Right ventricle myocardium inferior (tissue), 1 donor: ENCODE measurements at regions of chr11 and their contacts with region 1.

Region 1: GRCh38 chr11:59171508-59172322 is at the start of gene DTX4:
- DNase-seq: peak; percentile 97
- ATAC-seq: peak; percentile 96
- total RNA-seq, gene DTX4: 2.1 TPM

Region 2: GRCh38 chr11:58829786-58830185 is 341.9 kb before region 1 on chr11:
- intact Hi-C with region 1: no loop called
- DNase-seq: no peak
- ATAC-seq: no peak

Region 3: GRCh38 chr11:59207988-59208451 is 36.3 kb after region 1 on chr11:
- intact Hi-C with region 1: loop called (anchors 1 kb)
- DNase-seq: no peak
- ATAC-seq: peak; percentile 64

Region 4: GRCh38 chr11:59283825-59284772 is 112.4 kb after region 1 on chr11:
- intact Hi-C with region 1: loop called (anchors 1 kb)
- DNase-seq: no peak
- ATAC-seq: peak; percentile 52

Region 5: GRCh38 chr11:59429924-59430516 is 258.3 kb after region 1 on chr11:
- intact Hi-C with region 1: loop called (anchors 10 kb)
- DNase-seq: no peak
- ATAC-seq: no peak

Region 6: GRCh38 chr11:59680287-59681154 is 508.8 kb after region 1 on chr11:
- intact Hi-C with region 1: loop called (anchors 10 kb)
- DNase-seq: no peak
- ATAC-seq: peak; percentile 88